Calu3 (cell line): ENCODE measurements at regions of chr11 and their contacts with region 1.

Region 1: GRCh38 chr11:47509077-47509536 is 43.8 kb downstream of the CELF1 start:
- DNase-seq: peak; percentile 57
- H3K4me3 Mint-ChIP-seq: peak overlapping the region; percentile 51
- H3K27ac Mint-ChIP-seq: peak overlapping the region; percentile 86
- H3K4me1 Mint-ChIP-seq: peaks cover 34% of the 10 kb centered on the region
- H3K27me3 Mint-ChIP-seq: no peaks in the 10 kb centered on the region
- CTCF ChIP-seq: no peak

Region 2: DNA sequence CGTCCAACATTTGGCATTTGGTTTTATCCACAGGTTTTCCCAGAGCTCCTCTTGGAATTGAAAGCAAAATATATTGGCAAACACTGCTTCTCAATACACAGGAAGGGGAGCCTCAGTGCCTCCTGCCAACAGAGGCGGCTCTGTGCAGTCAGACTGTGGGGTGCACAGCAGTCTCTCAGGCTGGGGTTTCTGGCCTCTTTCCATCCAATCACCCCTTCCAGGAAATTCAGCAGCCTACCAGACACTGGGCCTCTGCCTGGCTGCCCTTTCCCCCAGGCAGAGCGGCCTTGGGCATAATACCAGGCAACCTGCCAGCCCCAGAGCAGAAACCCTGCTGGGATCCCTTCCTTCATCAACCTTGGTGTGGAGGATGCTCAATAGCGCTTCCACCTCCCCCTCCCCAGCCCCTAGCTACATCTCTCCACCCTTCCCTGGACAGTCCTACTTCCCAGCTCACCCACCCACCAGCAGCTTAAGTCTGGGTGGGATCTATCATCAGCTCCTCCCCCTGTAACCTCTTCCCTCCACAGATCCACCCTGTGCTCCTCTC is 42.3 kb before region 1 on chr11:
- CTCF ChIA-PET with region 1: no interaction called
- intact Hi-C with region 1: no loop called
- DNase-seq: no peak
- H3K4me3 Mint-ChIP-seq: no peak overlapping the region
- H3K27ac Mint-ChIP-seq: no peak overlapping the region
- H3K4me1 Mint-ChIP-seq: no peaks in the 10 kb centered on the region
- H3K27me3 Mint-ChIP-seq: no peaks in the 10 kb centered on the region
- CTCF ChIP-seq: no peak

Region 3: DNA sequence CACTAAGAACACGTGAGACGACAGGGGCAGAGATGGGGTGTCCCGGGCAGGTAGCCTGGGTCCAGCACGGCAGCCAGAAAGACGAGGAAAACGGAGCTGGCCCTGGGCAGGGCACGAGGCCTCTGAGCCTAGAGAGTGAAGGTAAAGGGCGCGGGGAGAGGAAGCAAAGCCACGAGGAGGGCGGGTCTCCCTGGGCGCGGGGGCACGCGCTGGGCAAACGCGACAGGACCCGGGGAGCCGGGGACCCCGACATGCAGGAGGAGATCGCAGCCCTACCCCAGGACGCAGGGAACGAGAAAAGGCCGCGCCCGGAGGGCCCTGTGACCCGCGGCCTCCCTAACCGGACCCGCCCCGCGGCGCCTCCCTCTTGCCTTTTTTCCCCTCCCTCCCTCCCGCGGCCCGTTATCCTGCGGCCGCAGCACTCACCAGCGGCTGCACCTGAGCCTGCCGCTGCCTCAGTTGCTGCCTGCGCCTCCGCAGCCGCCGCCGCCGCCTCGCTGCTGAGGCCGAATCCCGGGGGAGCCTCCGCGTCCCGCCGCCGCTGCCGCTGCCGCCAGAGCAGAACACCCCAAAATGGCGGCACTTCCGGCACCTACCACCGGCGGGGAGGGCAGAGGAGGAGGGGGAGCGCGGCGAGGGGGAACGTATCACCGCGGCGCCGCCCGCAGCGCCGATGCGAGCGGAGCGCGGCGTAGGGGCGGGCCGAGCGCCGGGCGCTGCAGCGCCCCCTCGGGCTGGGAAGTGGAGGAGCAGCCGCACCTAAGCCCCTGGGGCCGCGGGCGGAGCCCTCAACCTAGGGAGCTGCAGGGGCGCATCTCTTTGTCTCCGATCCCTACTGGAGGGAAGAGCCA is 43.7 kb after region 1 on chr11 and contains the start of gene CELF1:
- CTCF ChIA-PET with region 1: interaction called, 5 read pairs
- intact Hi-C with region 1: loop called (anchors 5 kb)
- DNase-seq: peak; percentile 94
- H3K4me3 Mint-ChIP-seq: peak within 1 kb of the TSS; percentile 90
- H3K27ac Mint-ChIP-seq: peak within 1 kb of the TSS; percentile 85
- H3K4me1 Mint-ChIP-seq: peaks cover 14% of the 10 kb centered on the region
- H3K27me3 Mint-ChIP-seq: no peaks in the 10 kb centered on the region
- CTCF ChIP-seq: peak; percentile 82
- total RNA-seq, gene CELF1: 150 and 157 TPM in 2 replicates